Mammary epithelial cell (primary cell): ENCODE measurements at regions of chr6 and their contacts with region 1.

Region 1: GRCh38 chr6:27902335-27903314 is 9.6 kb downstream of the OR2B2 start:
- DNase-seq: peak; percentile 80
- H3K4me3 ChIP-seq: peak overlapping the region; percentile 55 to 84 (median 68)
- H3K27ac ChIP-seq: peak overlapping the region; percentile 60
- H3K4me1 ChIP-seq: peaks cover 10% of the 10 kb centered on the region
- H3K27me3 ChIP-seq: no peaks in the 10 kb centered on the region
- CTCF ChIP-seq: no peak

Region 2: GRCh38 chr6:27940766-27941165 is 38.1 kb after region 1 on chr6:
- CTCF ChIA-PET with region 1: no interaction called
- dilution Hi-C with region 1: no loop called
- in situ Hi-C with region 1: no loop called
- intact Hi-C with region 1: no loop called
- DNase-seq: peak; percentile 1
- H3K4me3 ChIP-seq: no peak overlapping the region
- H3K27ac ChIP-seq: no peak overlapping the region
- H3K4me1 ChIP-seq: no peaks in the 10 kb centered on the region
- H3K27me3 ChIP-seq: no peaks in the 10 kb centered on the region
- CTCF ChIP-seq: no peak

Region 3: GRCh38 chr6:28212510-28213212 is 310.0 kb after region 1 on chr6:
- CTCF ChIA-PET with region 1: no interaction called
- dilution Hi-C with region 1: no loop called
- in situ Hi-C with region 1: loop called in 1 of 2 experiments (anchors 25 kb)
- intact Hi-C with region 1: loop called (anchors 1 kb)
- DNase-seq: peak; percentile 93
- H3K4me3 ChIP-seq: peak overlapping the region; percentile 61 to 62 (median 61)
- H3K27ac ChIP-seq: peak overlapping the region; percentile 77
- H3K4me1 ChIP-seq: peaks cover 19% of the 10 kb centered on the region
- H3K27me3 ChIP-seq: no peaks in the 10 kb centered on the region
- CTCF ChIP-seq: peak; percentile 13 to 28

Region 4: GRCh38 chr6:28218271-28219248 is 315.9 kb after region 1 on chr6:
- CTCF ChIA-PET with region 1: no interaction called
- dilution Hi-C with region 1: no loop called
- in situ Hi-C with region 1: loop called in 1 of 2 experiments (anchors 25 kb)
- intact Hi-C with region 1: no loop called
- DNase-seq: peak; percentile 20
- H3K4me3 ChIP-seq: peak overlapping the region; percentile 54 to 73 (median 55)
- H3K27ac ChIP-seq: no peak overlapping the region
- H3K4me1 ChIP-seq: peaks cover 5% of the 10 kb centered on the region
- H3K27me3 ChIP-seq: no peaks in the 10 kb centered on the region
- CTCF ChIP-seq: no peak